Astrocyte of the cerebellum (primary cell): ENCODE measurements at regions of chr15 and their contacts with region 1.

Region 1: DNA sequence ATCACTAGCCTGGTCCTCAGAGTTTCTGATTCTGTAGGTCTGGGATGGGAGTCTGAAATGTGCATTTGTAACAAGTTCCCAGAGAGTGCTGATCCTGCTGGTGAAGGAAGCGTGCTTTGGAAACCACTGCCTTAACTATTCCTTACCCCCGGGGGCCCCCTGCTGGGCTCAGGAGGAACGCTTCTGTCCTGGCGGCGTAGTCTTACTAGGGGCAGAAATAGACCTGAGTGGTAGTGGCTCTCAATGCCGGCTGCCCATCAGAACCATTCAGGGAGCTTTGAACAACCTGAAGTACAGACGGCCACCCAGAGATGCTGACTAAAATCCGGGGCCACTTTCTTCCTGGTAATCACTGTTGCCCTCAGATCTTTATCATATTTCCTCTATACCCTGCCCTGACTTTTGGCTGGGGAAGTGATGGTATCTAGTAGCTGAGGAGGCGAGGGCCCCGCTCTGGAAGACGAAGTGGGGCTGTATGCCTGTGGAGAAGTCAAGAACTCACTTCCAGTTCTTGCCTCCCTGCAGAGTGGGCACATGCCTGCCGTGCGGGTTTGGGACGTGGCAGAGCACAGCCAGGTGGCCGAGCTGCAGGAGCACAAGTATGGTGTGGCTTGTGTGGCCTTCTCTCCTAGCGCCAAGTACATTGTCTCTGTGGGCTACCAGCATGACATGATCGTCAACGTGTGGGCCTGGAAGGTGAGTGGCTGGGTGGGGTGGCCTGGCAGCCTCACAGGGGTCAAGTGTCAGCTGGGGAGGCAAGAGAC is 16.3 kb upstream of the JMJD7 start:
- DNase-seq: peak; percentile 40
- H3K4me3 ChIP-seq: no peak overlapping the region
- CTCF ChIP-seq: peak; percentile 67

Region 2: DNA sequence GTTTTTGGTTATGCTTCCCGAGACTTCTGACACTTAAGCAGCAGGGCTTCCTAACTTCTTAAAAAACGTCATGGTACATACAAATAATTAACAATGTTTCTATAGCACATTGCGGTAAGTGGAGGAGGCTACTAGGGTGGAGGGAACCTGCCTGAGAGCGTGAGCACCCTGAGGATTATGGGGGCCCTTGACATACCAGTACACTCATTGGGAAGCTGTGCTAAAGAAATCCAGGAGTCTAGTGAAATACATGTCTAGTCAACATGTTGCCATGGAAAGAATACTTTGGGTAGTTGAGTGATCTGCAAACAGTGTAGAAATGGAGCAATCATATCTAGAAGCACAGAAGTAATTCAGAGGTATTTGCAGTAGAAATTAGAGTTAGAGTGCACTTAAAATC is 76.6 kb before region 1 on chr15:
- in situ Hi-C with region 1: loop called (anchors 5 kb)
- DNase-seq: no peak
- H3K4me3 ChIP-seq: no peak overlapping the region
- CTCF ChIP-seq: no peak

Region 3: GRCh38 chr15:41774882-41775417 is 36.7 kb before region 1 on chr15:
- in situ Hi-C with region 1: loop called (anchors 5 kb)
- DNase-seq: no peak
- H3K4me3 ChIP-seq: peak overlapping the region; percentile 81
- CTCF ChIP-seq: no peak